OCI-LY7 (cell line): ENCODE measurements at regions of chr4 and their contacts with region 1.

Region 1: DNA sequence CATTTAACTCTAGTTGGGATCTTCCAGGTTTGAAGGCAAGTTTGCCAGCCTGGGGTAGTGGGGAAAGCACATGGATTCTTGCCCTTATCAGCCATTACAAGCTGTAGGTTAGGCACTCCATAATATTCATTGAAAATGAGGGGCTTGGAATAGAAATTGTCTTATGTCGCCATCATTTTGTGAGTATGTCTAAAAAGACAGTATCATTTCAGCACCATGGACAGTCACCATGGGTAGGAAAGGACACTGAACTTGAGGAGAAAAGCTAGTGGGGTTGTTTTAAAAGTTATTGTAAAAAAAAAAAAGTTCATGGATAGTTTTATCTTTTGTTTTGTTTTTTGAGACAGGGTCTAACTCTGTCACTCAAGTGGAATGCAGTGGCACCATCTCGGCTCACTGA is 356.1 kb downstream of the HNRNPD start:
- DNase-seq: peak; percentile 58
- H3K4me3 ChIP-seq: no peak overlapping the region
- H3K27ac ChIP-seq: no peak overlapping the region
- H3K4me1 ChIP-seq: no peaks in the 10 kb centered on the region
- CTCF ChIP-seq: no peak

Region 2: DNA sequence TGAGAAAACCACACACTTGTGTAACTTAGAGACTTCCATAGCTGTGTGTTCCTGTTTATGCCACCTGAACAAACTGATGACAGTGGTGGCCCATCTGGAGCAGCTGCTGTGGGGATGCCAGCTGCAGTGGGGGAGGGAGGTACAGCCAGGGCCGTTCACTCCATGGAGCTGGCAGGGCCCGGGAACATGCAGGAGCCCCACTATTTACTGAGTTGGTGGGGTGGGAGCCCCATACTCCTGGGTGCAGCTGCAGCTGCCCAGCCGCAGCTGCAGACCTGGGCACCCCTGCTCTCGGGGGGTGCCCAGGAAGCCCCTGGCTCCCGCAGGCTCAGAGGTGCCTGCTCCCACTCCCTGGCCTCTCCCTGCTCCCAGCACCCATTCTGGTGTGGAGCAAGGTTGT is 147.4 kb before region 1 on chr4:
- CTCF ChIA-PET with region 1: no interaction called
- POLR2A ChIA-PET with region 1: no interaction called
- intact Hi-C with region 1: loop called (anchors 5 kb)
- DNase-seq: no peak
- H3K4me3 ChIP-seq: no peak overlapping the region
- H3K27ac ChIP-seq: no peak overlapping the region
- H3K4me1 ChIP-seq: no peaks in the 10 kb centered on the region
- CTCF ChIP-seq: no peak

Region 3: DNA sequence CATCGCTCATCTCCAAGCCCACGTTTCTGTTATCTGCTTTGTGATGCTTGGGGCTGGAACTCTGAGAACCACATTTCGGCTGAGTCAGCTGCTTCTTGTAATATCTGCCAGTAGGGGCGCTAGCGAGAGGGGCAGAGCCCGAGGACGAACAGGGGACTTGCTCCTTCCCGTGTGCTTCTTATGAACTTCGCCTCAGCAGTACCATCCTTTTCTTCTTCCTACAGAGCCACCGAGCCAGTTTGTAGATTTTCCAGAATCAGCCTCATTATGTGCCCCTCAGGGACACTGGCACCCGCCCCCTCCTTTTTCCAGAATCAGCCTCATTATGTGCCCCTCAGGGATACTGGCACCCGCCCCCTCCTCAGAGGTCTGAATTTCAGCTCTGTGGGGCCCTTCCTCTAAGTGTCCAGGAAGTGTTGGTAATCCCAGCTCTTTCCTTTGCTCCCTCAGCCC is 104.2 kb before region 1 on chr4:
- CTCF ChIA-PET with region 1: no interaction called
- POLR2A ChIA-PET with region 1: no interaction called
- intact Hi-C with region 1: loop called (anchors 10 kb)
- DNase-seq: peak; percentile 83
- H3K4me3 ChIP-seq: no peak overlapping the region
- H3K27ac ChIP-seq: no peak overlapping the region
- H3K4me1 ChIP-seq: no peaks in the 10 kb centered on the region
- CTCF ChIP-seq: peak; percentile 93